MCF 10A (cell line): ENCODE measurements at regions of chr6 and their contacts with region 1.

Region 1: GRCh38 chr6:36423101-36423824 is 19.4 kb downstream of the PXT1 start:
- DNase-seq: peak; percentile 98
- H3K4me3 Mint-ChIP-seq: peak overlapping the region; percentile 73
- H3K27ac Mint-ChIP-seq: peak overlapping the region; percentile 91
- H3K4me1 Mint-ChIP-seq: peaks cover 28% of the 10 kb centered on the region
- H3K27me3 Mint-ChIP-seq: no peaks in the 10 kb centered on the region
- CTCF ChIP-seq: peak; percentile 63

Region 2: DNA sequence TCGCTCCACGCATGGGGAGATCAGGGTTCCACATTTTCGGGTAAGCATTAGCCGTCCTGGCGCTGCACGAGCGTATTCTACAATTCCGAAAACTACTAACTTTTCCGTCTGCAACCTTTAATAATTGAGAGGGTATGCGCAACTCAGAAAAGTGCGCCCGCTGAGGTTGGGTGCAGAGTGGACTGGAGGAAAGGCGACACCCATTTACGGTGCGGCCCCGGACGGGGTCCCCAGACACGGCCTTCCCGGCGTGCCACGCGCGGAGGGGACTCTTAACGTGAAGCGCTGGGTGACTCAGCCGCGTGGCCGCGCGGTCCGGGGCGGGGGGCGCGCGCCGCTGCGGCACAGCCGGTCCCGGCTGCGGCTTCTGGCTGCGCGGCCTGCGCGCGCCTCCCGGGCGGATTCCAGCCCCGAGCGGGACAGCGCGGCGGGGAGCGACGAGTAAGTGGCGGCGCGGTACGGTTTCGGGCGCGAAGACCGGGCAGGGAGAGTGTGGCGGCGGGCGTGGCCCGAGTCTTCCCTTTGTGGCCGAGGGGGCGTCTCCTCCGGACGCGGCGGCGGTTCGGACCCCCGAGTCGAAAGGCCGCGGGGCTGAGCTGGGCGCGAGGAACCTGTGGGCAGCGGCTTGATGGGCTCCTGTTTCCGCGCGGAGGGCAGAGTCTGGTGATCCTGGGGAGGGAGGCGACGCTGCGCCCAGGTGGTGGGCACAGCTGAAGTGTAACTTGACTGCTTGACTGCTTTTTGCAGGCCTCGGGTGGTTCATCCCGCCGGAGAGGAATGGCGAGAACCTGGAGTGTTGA is 19.6 kb after region 1 on chr6 and contains the starts of genes KCTD20 and PXT1:
- CTCF ChIA-PET with region 1: interaction called, 10 read pairs
- POLR2A ChIA-PET with region 1: interaction called, 68 read pairs
- intact Hi-C with region 1: loop called (anchors 1 kb)
- DNase-seq: peak; percentile 83
- H3K4me3 Mint-ChIP-seq: peak within 1 kb of the TSS; percentile 87
- H3K27ac Mint-ChIP-seq: peak within 1 kb of the TSS; percentile 88
- H3K4me1 Mint-ChIP-seq: peaks cover 27% of the 10 kb centered on the region
- H3K27me3 Mint-ChIP-seq: no peaks in the 10 kb centered on the region
- CTCF ChIP-seq: no peak
- total RNA-seq, gene KCTD20: 46.6 and 52.0 TPM in 2 replicates
- total RNA-seq, gene PXT1: 0.15 TPM in 1 of 2 replicates, not detected in the other

Region 3: DNA sequence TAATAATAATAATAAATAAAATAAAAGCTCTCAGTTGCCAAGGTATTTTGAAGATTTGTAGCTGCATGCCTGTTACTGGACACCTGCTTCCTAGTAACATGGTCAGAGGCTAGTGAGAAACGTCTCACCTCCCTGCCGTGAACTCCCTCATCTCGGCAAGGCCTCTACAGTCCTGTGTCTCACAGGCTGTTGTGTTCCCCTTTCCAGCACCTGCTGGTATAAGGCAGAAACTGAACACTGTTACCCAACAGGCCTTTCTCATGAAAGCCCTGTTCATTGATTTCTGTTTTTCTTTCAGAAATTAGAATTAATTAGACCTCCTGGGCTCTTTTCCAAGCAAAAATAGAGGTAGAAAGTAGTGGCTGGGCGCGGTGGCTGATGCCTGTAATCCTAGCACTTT is 153.3 kb after region 1 on chr6:
- CTCF ChIA-PET with region 1: interaction called, 5 read pairs
- POLR2A ChIA-PET with region 1: interaction called, 6 read pairs
- intact Hi-C with region 1: loop called (anchors 1 kb)
- DNase-seq: no peak
- H3K4me3 Mint-ChIP-seq: no peak overlapping the region
- H3K27ac Mint-ChIP-seq: peak overlapping the region; percentile 81
- H3K4me1 Mint-ChIP-seq: peaks cover 20% of the 10 kb centered on the region
- H3K27me3 Mint-ChIP-seq: no peaks in the 10 kb centered on the region
- CTCF ChIP-seq: no peak

Region 4: GRCh38 chr6:36615018-36615761 is 191.9 kb after region 1 on chr6:
- CTCF ChIA-PET with region 1: interaction called, 4 read pairs
- POLR2A ChIA-PET with region 1: no interaction called
- intact Hi-C with region 1: loop called (anchors 2 kb)
- DNase-seq: peak; percentile 80
- H3K4me3 Mint-ChIP-seq: no peak overlapping the region
- H3K27ac Mint-ChIP-seq: no peak overlapping the region
- H3K4me1 Mint-ChIP-seq: peaks cover 15% of the 10 kb centered on the region
- H3K27me3 Mint-ChIP-seq: no peaks in the 10 kb centered on the region
- CTCF ChIP-seq: peak; percentile 74

Region 5: DNA sequence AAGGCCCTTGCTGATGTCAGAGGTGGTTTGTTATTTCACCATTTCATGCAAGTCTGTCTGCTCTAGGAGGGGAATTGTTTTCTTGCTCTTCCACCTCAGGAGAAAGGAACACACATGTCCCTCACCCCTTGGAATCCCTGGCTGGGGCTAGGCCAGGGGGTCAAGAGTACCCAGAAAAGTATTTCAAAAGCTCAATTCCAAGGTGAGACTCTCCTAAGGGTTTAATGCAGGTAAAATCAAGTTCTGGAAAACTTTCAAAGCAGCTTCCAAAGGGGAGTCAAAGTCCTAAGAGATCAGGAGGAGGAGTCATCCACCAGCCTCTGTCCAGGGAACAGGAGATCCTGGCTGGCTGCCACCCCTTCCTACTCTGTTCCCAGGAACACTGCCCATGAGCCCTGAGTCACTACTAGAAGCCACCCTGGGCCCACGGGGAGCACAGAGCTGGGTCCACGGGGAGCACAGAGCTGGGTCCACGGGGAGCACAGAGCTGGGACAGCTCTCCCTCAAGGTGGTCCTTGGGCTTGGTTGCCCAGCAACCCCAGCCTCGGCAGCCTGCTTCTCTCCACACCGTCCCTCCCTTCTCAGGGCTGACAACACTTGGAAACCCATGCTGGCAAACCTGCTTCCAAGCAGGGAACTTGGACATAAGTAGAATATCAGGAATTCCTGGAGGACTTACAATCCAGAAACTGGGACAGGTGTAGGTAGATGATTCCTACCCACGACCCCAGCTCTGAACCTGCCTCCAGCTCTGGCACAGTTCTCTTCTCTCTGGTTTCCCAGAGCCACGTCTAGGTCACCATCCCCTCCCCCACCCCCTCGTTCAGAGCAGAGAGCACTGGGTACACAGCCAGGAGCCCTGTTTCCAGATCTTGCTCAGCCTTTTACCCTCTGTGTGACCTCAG is 219.9 kb after region 1 on chr6:
- CTCF ChIA-PET with region 1: no interaction called
- POLR2A ChIA-PET with region 1: no interaction called
- intact Hi-C with region 1: no loop called
- DNase-seq: peak; percentile 95
- H3K4me3 Mint-ChIP-seq: no peak overlapping the region
- H3K27ac Mint-ChIP-seq: peak overlapping the region; percentile 31
- H3K4me1 Mint-ChIP-seq: peaks cover 14% of the 10 kb centered on the region
- H3K27me3 Mint-ChIP-seq: no peaks in the 10 kb centered on the region
- CTCF ChIP-seq: no peak

Region 6: GRCh38 chr6:36759148-36759759 is 336.0 kb after region 1 on chr6:
- CTCF ChIA-PET with region 1: interaction called, 8 read pairs
- POLR2A ChIA-PET with region 1: no interaction called
- intact Hi-C with region 1: loop called (anchors 1 kb)
- DNase-seq: peak; percentile 70
- H3K4me3 Mint-ChIP-seq: no peak overlapping the region
- H3K27ac Mint-ChIP-seq: no peak overlapping the region
- H3K4me1 Mint-ChIP-seq: peaks cover 11% of the 10 kb centered on the region
- H3K27me3 Mint-ChIP-seq: no peaks in the 10 kb centered on the region
- CTCF ChIP-seq: peak; percentile 97